SK-N-SH (cell line): ENCODE measurements at regions of chr6 and their contacts with region 1.

Region 1: GRCh38 chr6:18579869-18580268 is 192.7 kb downstream of the RNF144B start:
- DNase-seq: peak; percentile 20
- H3K4me3 ChIP-seq: no peak overlapping the region
- H3K27ac ChIP-seq: no peak overlapping the region; a peak in 1 of 4 replicates
- H3K4me1 ChIP-seq: peaks cover 3 to 11% of the 10 kb centered on the region in 2 experiments; a peak in 3 of 4 replicates
- H3K27me3 ChIP-seq: no peaks in the 10 kb centered on the region
- CTCF ChIP-seq: no peak
- EP300 ChIP-seq: peak in 1 of 2 experiments; percentile 90; a peak in 2 of 4 replicates
- RAD21 ChIP-seq: no peak

Region 2: DNA sequence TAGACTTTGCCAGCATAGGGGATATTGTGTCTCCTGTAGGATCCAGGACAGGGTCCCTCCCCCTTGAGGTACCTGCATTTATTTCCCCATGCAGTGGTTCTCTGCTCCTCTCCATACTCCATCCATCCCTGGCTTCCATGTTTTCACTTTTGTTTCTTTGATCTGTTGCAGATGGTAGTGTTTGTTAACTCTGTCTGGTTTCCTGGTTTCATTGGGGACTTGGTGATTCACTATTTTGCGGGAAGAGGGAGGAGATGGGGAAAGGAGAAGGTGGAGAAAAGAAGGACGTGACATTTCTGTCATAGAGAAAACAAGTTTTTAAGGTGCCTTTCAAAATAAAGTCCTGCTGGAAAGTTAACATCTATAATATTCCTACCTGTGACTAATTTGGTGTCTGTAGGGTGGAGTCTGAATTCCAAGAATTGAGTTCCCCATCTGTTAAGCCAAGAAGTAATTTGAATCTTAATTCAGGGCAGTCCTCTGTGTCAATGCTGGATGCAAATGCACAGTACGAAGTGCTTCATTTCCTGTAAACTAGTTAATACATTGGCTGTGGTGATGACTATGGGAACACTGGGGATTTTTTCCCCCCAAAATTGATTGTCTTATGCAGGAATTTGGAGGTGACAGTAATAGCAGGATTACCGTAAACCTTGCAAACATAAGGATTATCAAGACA is 199.6 kb before region 1 on chr6:
- CTCF ChIA-PET with region 1: no interaction called
- POLR2A ChIA-PET with region 1: no interaction called
- DNase-seq: no peak
- H3K4me3 ChIP-seq: no peak overlapping the region
- H3K27ac ChIP-seq: no peak overlapping the region
- H3K4me1 ChIP-seq: no peaks in the 10 kb centered on the region
- H3K27me3 ChIP-seq: no peaks in the 10 kb centered on the region
- CTCF ChIP-seq: no peak
- EP300 ChIP-seq: no peak
- RAD21 ChIP-seq: no peak

Region 3: GRCh38 chr6:18457065-18457812 is 122.6 kb before region 1 on chr6:
- CTCF ChIA-PET with region 1: no interaction called
- POLR2A ChIA-PET with region 1: no interaction called
- DNase-seq: no peak
- H3K4me3 ChIP-seq: no peak overlapping the region
- H3K27ac ChIP-seq: no peak overlapping the region
- H3K4me1 ChIP-seq: no peaks in the 10 kb centered on the region; a peak in 1 of 4 replicates
- H3K27me3 ChIP-seq: no peaks in the 10 kb centered on the region
- CTCF ChIP-seq: no peak
- EP300 ChIP-seq: no peak
- RAD21 ChIP-seq: no peak

Region 4: DNA sequence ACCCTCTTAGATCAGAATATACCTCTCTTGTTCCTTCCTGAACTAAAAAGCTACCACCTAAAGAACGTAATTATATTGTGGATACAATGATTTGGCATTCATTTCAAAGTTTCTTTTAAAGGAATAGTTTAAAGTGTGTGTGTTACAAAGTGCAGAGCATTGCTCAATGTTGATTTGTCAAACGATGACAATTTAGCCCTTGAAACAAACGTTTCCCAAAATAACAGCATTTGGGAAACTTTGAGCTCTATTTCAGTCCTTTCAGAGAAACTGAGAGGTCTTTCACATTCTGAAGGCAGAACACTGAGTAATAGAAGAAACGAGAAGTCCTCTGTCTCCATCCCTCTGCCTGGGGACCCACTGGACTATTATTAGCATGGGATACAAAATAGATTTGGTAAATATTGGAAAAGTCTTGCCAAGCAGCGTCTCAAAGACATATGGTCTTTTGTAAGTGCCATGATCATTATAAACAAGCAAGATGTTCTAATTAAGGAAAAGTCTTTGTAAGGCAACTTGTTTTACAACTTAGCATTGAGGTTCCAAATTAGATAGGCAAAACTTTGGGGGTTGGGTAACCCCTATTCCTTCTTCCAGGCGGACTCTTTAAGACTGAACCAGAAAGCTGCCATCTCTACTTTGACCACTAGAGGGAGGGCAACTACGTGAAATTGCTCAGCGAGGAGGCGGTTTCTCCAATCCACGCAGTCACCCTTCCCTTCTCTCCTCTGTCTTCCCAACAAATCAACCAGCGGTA is 16.1 kb after region 1 on chr6:
- CTCF ChIA-PET with region 1: interaction called, 15 read pairs
- POLR2A ChIA-PET with region 1: no interaction called
- DNase-seq: peak; percentile 40
- H3K4me3 ChIP-seq: no peak overlapping the region
- H3K27ac ChIP-seq: no peak overlapping the region
- H3K4me1 ChIP-seq: peaks cover 0 to 6% of the 10 kb centered on the region in 2 experiments; a peak in 1 of 4 replicates
- H3K27me3 ChIP-seq: no peaks in the 10 kb centered on the region
- CTCF ChIP-seq: peak; percentile 93
- EP300 ChIP-seq: no peak
- RAD21 ChIP-seq: peak; percentile 84

Region 5: DNA sequence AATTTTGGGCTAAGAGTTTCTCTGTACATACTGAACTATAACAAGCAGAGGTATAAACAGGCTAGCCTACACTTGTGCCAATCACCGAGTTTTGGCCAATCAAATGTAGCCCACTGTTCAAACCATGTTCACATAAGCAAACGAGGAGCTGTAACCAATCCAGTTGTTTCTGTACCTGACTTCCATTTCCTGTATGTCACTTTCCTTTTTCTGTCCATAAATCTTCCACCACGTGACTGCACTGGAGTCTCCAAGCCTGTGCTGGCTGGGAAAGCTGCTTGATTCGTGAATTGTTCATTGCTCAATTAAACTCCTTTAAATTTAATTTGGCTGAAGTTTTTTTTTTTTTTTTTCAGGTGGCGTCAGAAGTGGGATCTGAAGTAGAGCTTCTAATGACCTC is 140.2 kb after region 1 on chr6:
- CTCF ChIA-PET with region 1: no interaction called
- POLR2A ChIA-PET with region 1: no interaction called
- DNase-seq: no peak
- H3K4me3 ChIP-seq: no peak overlapping the region
- H3K27ac ChIP-seq: no peak overlapping the region
- H3K4me1 ChIP-seq: no peaks in the 10 kb centered on the region
- H3K27me3 ChIP-seq: no peaks in the 10 kb centered on the region
- CTCF ChIP-seq: no peak
- EP300 ChIP-seq: no peak
- RAD21 ChIP-seq: no peak